Activated T-helper 1 cell treated with anti-CD3 and anti-CD28 coated beads, Interleukin-12 subunit alpha, Interleukin-12 subunit beta, Interleukin-2, Interleukin-4 antibody, amounts not matched to agents 30 ng/mL and 10 ng/mL and 1 ng/mL, durations not matched to agents 14 hours and 24 hours and 36 hours (primary cell): ENCODE measurements at regions of chr17 and their contacts with region 1.

Region 1: DNA sequence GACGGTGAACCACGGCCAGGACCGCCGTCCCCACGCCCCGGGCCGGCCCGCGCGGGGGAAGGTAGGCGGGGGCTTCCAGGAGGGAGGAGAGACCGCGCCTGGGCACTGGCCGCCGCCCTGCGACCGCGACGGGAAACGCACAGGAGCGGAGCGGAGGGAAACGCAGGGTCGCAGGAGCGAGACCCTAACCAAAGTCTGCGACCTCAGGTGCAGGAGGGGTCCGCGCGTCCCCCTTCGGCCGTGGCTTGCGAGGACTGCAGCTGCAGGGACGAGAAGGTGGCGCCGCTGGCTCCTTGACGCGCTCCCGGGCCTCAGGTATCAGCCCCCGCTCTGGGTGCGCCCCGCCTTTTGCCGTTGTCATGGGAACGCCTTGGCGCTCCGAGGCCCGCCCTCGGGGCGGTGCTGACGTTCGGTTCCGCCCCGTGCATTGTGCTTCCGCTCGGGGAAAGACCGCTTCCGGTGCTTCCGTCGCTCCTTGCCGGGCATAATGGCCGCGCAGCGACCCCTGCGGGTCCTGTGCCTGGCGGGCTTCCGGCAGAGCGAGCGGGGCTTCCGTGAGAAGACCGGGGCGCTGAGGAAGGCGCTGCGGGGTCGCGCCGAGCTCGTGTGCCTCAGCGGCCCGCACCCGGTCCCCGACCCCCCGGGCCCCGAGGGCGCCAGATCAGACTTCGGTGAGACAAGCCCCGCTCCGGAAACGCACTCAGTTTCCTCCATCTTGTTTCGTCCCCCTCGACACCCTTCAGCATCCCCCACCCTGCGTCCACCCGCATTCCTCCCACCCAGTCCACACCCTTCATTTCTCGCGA is at the start of gene OVCA2:
- DNase-seq: peak; percentile 97
- H3K4me3 Mint-ChIP-seq: peak within 1 kb of the TSS; percentile 96
- H3K27ac Mint-ChIP-seq: peak within 1 kb of the TSS; percentile 98
- H3K4me1 Mint-ChIP-seq: peaks cover 31% of the 10 kb centered on the region
- H3K27me3 Mint-ChIP-seq: peaks cover 3% of the 10 kb centered on the region
- total RNA-seq, gene OVCA2: 43.9 and 44.0 TPM in 2 replicates

Region 2: DNA sequence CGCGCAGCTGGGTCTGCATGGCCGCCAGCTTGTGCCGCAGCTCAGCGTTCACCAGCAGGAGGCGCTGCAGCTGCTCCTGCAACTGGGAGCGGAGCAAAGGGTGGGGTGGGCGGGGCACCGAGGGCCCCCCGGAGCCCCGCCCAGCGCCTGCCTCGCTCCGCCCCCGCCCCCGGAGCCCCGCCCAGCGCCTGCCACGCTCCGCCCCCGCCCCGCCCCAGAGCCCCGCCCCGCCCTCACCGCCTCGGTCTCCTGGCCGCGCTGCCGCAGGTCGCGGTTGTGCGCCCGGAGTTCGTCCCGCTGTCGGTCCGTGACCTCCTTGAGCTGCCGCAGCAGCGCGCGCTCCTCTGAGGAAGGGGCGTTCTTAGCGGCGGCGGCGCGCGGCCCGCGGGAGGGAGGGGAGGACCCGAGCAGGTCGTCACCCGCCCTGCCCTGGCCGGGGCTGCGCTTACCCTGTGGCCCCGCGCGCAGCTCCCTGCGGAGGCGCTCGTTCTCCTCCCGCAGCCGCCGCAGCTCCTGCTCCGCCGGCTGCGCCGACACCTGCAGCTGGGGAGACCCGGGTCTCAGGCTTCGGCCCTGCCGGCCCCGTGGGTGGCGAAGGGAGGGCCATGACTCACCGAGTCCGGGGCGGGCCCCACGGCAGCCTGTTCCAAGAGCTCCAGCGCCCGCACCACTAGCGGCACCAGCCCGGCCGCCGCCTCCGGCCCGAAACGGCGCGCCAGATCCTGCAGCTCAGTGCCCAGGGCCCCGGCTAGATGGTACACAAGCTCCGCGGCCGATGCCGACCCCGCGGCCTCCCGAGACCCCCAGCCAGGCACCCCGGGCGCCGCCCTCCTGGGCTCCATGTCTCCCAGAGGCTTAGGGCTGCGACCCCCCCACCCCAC is 392.6 kb before region 1 on chr17:
- intact Hi-C with region 1: loop called (anchors 5 kb)
- DNase-seq: peak; percentile 92
- H3K4me3 Mint-ChIP-seq: peak overlapping the region; percentile 59
- H3K27ac Mint-ChIP-seq: no peak overlapping the region
- H3K4me1 Mint-ChIP-seq: peaks cover 22% of the 10 kb centered on the region
- H3K27me3 Mint-ChIP-seq: peaks cover 2% of the 10 kb centered on the region

Region 3: GRCh38 chr17:1870592-1870991 is 171.2 kb before region 1 on chr17:
- intact Hi-C with region 1: loop called (anchors 5 kb)
- DNase-seq: peak; percentile 28
- H3K4me3 Mint-ChIP-seq: peak overlapping the region; percentile 62
- H3K27ac Mint-ChIP-seq: peak overlapping the region; percentile 99
- H3K4me1 Mint-ChIP-seq: peaks cover 75% of the 10 kb centered on the region
- H3K27me3 Mint-ChIP-seq: no peaks in the 10 kb centered on the region

Region 4: GRCh38 chr17:1908699-1909309 is 133.0 kb before region 1 on chr17:
- intact Hi-C with region 1: loop called (anchors 1 kb)
- DNase-seq: peak; percentile 32
- H3K4me3 Mint-ChIP-seq: peak overlapping the region; percentile 50
- H3K27ac Mint-ChIP-seq: no peak overlapping the region
- H3K4me1 Mint-ChIP-seq: no peaks in the 10 kb centered on the region
- H3K27me3 Mint-ChIP-seq: peaks cover 61% of the 10 kb centered on the region

Region 5: DNA sequence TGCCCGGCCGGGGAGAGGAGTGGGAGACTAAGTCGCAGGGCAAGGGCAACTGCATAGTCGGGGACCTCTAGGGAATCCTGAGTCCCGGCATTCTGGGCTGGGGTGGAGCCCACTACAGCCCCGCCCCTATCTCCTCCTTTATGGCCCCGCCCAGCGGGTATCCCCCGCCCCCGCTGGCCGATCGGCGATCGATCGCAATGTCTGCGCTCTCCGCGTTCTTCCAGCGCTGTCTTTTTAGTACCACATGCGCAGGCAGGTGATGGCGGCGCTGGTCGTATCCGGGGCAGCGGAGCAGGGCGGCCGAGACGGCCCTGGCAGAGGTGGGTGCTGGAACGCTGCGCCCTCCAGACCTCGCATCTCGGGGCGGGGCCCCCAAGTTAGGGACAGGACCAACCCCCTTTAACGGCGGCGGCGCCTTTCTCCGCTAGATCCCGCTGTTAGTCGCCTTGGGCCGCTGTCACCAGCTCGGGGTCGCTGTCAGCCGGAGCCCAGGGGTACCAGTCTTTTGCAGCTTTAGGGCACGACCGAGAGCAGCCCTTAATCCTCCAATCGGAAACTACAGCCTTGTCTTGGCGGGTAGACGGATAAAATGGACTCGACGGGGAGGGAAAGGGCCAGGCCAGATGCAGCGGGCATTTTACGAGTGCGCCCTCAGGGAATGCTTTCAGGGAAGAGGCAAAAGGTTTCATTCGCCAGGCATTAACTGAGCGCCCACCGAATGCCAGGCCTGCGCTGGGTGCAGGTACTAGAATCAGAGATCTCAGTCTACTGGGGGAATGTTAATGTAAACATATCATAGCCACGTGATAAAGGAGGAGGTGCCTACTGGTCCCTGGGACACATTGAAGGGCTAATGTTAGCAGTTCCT is 11.6 kb before region 1 on chr17 and contains the start of gene DPH1:
- intact Hi-C with region 1: loop called (anchors 1 kb)
- DNase-seq: peak; percentile 85
- H3K4me3 Mint-ChIP-seq: peak within 1 kb of the TSS; percentile 92
- H3K27ac Mint-ChIP-seq: peak within 1 kb of the TSS; percentile 75
- H3K4me1 Mint-ChIP-seq: peaks cover 13% of the 10 kb centered on the region
- H3K27me3 Mint-ChIP-seq: peaks cover 35% of the 10 kb centered on the region
- total RNA-seq, gene DPH1: 49.4 and 61.3 TPM in 2 replicates

Region 6: GRCh38 chr17:2401426-2402221 is 359.9 kb after region 1 on chr17:
- intact Hi-C with region 1: no loop called
- DNase-seq: peak; percentile 100
- H3K4me3 Mint-ChIP-seq: peak overlapping the region; percentile 93
- H3K27ac Mint-ChIP-seq: peak overlapping the region; percentile 98
- H3K4me1 Mint-ChIP-seq: peaks cover 54% of the 10 kb centered on the region
- H3K27me3 Mint-ChIP-seq: no peaks in the 10 kb centered on the region